K562 (cell line): ENCODE measurements at regions of chr5 and their contacts with region 1.

Region 1: GRCh38 chr5:33409435-33410170 is 31.2 kb upstream of the TARS1 start:
- DNase-seq: no peak
- ATAC-seq: no peak
- H3K4me3 ChIP-seq: no peak overlapping the region
- H3K27ac ChIP-seq: no peak overlapping the region
- H3K4me1 ChIP-seq: no peaks in the 10 kb centered on the region
- H3K27me3 ChIP-seq: no peaks in the 10 kb centered on the region
- CTCF ChIP-seq: no peak
- EP300 ChIP-seq: no peak
- POLR2A ChIP-seq: no peak
- RAD21 ChIP-seq: no peak

Region 2: GRCh38 chr5:32628048-32628803 is 781.4 kb before region 1 on chr5:
- CTCF ChIA-PET with region 1: no interaction called
- POLR2A ChIA-PET with region 1: no interaction called
- in situ Hi-C with region 1: no loop called
- intact Hi-C with region 1: loop called (anchors 10 kb)
- DNase-seq: no peak
- ATAC-seq: peak; percentile 27; the same call in 1 of the 3 replicates
- H3K4me3 ChIP-seq: no peak overlapping the region
- H3K27ac ChIP-seq: no peak overlapping the region
- H3K4me1 ChIP-seq: no peaks in the 10 kb centered on the region
- H3K27me3 ChIP-seq: peaks cover 17 to 41% of the 10 kb centered on the region in 2 experiments
- CTCF ChIP-seq: peak in 1 of 3 experiments; percentile 24; a peak in 1 of 6 replicates
- EP300 ChIP-seq: no peak
- POLR2A ChIP-seq: no peak
- RAD21 ChIP-seq: peak in 1 of 2 experiments; percentile 41; a peak in 2 of 4 replicates

Region 3: DNA sequence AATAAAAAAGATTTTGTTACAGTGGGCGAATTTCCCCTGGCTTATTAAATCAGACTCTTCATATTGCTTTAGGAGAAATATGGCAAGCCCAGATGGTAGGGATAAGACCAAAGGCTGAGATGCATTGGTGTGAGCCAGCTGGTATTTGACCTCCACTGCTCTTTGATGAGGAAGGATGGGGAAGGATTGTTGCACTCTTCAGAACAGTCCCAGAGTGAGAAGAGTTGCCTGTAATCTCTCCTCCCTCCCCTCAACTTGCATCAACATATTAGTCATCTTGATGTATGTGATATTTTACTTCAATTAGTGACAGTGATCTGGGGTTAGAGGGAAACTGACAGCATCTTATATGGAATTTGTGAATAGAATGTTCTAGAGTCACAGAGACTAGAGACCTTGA is 345.6 kb after region 1 on chr5:
- CTCF ChIA-PET with region 1: no interaction called
- POLR2A ChIA-PET with region 1: no interaction called
- in situ Hi-C with region 1: no loop called
- intact Hi-C with region 1: no loop called
- DNase-seq: no peak
- ATAC-seq: no peak
- H3K4me3 ChIP-seq: no peak overlapping the region
- H3K27ac ChIP-seq: no peak overlapping the region
- H3K4me1 ChIP-seq: no peaks in the 10 kb centered on the region
- H3K27me3 ChIP-seq: no peaks in the 10 kb centered on the region
- CTCF ChIP-seq: no peak
- EP300 ChIP-seq: no peak
- POLR2A ChIP-seq: no peak
- RAD21 ChIP-seq: no peak